BJ (cell line): ENCODE measurements at regions of chr3 and their contacts with region 1.

Region 1: DNA sequence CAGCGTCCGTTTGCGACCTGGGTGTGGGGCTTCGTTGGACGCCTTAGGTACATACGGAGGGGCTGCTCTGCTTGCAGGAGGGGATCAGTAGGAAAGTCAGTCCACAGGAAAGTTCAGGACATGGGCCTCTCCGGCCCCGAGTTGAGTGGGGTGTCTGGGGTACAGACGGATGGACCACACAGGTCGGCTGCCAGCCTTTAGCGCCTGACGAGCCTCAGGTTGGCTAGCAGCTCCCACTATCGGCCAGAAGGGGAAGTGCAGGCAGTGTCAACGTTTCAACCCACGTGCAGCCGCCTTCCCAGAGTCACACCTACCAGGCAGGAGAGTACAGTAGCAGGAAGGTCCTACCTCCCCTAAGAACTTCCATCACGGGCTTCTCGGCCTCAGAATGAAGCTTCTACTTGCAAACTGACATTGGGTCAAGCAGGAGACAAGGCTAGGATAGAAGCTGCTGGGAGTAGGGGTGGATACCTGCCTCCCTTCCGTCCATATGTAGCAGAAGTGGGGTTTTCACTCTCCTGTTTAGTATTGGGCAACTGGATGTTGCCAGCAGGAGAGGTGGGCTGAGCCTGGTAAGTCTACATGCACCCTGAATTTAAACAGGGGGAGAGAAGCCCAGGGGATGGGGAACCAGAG is 1.8 kb upstream of the SCN5A start:
- DNase-seq: no peak
- H3K4me3 ChIP-seq: no peak overlapping the region
- H3K27me3 ChIP-seq: peaks cover 21% of the 10 kb centered on the region
- CTCF ChIP-seq: peak; percentile 99

Region 2: GRCh38 chr3:38496131-38496910 is 155.0 kb before region 1 on chr3 and contains the start of gene EXOG:
- CTCF ChIA-PET with region 1: interaction called, 14 read pairs
- POLR2A ChIA-PET with region 1: no interaction called
- DNase-seq: peak; percentile 58
- H3K4me3 ChIP-seq: peak within 1 kb of the TSS; percentile 55
- H3K27me3 ChIP-seq: no peaks in the 10 kb centered on the region
- CTCF ChIP-seq: peak; percentile 98
- polyA plus RNA-seq, gene EXOG: 7.5 and 11.8 TPM in 2 replicates

Region 3: GRCh38 chr3:38630606-38631005 is 20.7 kb before region 1 on chr3:
- CTCF ChIA-PET with region 1: interaction called, 10 read pairs
- POLR2A ChIA-PET with region 1: no interaction called
- DNase-seq: no peak
- H3K4me3 ChIP-seq: no peak overlapping the region
- H3K27me3 ChIP-seq: peaks cover 2% of the 10 kb centered on the region; the same call in 1 of the 2 replicates
- CTCF ChIP-seq: no peak

Region 4: GRCh38 chr3:38662544-38662943 is 11.3 kb after region 1 on chr3:
- CTCF ChIA-PET with region 1: interaction called, 31 read pairs
- POLR2A ChIA-PET with region 1: no interaction called
- DNase-seq: no peak
- H3K4me3 ChIP-seq: no peak overlapping the region
- H3K27me3 ChIP-seq: peaks cover 17% of the 10 kb centered on the region
- CTCF ChIP-seq: peak; percentile 48

Region 5: DNA sequence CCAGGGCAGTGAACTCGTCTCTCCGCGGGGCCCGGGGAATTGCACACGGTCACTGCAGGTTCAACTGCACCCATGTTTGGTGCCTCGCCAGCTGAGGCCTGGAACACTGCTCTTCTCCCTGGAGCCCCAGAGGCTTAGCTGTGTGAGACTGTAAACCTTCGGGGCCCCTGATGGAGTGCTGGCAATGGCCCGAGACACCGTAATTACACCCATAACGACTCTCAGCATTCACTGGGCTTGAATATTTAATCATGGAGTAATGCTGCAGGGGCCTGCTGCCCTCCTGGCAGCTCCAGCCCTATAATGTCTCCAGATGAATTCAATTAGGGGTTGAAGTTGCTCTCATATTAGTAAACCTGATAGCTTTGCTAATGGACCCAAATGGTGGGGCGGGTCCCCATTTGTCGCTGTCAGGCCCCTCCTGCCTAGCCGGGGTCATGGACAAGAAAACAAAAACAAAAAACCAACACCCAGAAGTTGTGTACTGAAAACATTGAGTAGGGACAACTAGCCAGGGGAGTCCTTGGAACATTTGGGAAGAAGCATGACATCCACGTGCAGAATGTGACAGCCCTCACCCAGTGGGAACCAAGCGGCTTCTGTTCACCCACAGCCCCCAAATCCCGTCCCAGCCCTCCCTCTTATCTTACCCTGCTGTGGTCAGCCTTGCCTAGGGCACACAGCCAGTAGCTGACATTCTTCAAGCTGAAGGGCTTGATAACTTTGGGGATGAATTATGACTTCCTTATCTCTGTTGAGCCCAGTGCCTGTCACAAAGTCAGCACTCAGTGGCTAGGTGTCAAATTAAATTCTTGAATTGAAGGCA is 72.5 kb after region 1 on chr3:
- CTCF ChIA-PET with region 1: interaction called, 12 read pairs
- POLR2A ChIA-PET with region 1: interaction called, 3 read pairs
- DNase-seq: no peak
- H3K4me3 ChIP-seq: no peak overlapping the region
- H3K27me3 ChIP-seq: no peaks in the 10 kb centered on the region
- CTCF ChIP-seq: no peak